ENCODE measurements at regions of chr7 and their contacts with region 1.

Region 1: GRCh38 chr7:129091484-129092002 is 36.6 kb upstream of the TNPO3 start:
- DNase-seq: peak; percentile 95
- H3K4me3 Mint-ChIP-seq: no peak overlapping the region
- H3K27ac Mint-ChIP-seq: peak overlapping the region; percentile 20
- H3K4me1 Mint-ChIP-seq: peaks cover 17% of the 10 kb centered on the region
- H3K27me3 Mint-ChIP-seq: no peaks in the 10 kb centered on the region

Region 2: DNA sequence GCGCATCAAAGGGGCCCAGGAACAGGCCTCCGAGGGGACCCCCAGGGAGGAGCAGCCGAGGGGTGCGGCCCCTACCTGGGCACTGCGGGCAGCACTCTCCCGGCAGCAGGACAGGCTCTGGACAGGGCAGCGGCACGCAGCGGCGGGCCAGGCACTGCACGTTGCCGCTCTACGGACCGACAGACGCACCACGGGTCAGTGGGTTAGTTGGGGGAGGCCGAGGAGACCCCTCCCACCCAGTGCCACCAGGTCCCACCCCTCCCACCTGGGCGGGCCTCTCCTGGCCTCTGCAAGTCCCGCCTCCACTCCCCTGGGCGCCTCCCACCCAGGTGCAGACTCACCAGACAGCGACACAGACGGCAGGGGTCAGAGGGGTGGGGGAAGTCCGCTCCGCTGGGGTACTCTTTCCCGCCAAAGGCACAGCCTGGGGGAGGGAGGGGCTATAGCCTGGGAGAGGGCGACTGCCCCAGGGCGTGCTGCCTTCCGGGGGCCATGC is 200.4 kb before region 1 on chr7:
- CTCF ChIA-PET with region 1: interaction called, 11 read pairs
- intact Hi-C with region 1: no loop called
- DNase-seq: peak; percentile 23
- H3K4me3 Mint-ChIP-seq: peak overlapping the region; percentile 23
- H3K27ac Mint-ChIP-seq: no peak overlapping the region
- H3K4me1 Mint-ChIP-seq: no peaks in the 10 kb centered on the region
- H3K27me3 Mint-ChIP-seq: peaks cover 11% of the 10 kb centered on the region

Region 3: GRCh38 chr7:128904381-128905197 is 187.0 kb before region 1 on chr7:
- CTCF ChIA-PET with region 1: interaction called, 21 read pairs
- intact Hi-C with region 1: loop called (anchors 1 kb)
- DNase-seq: peak; percentile 42
- H3K4me3 Mint-ChIP-seq: no peak overlapping the region
- H3K27ac Mint-ChIP-seq: no peak overlapping the region
- H3K4me1 Mint-ChIP-seq: no peaks in the 10 kb centered on the region
- H3K27me3 Mint-ChIP-seq: peaks cover 15% of the 10 kb centered on the region

Region 4: GRCh38 chr7:129009437-129009836 is 82.1 kb before region 1 on chr7:
- CTCF ChIA-PET with region 1: interaction called, 11 read pairs
- intact Hi-C with region 1: no loop called
- DNase-seq: no peak
- H3K4me3 Mint-ChIP-seq: no peak overlapping the region
- H3K27ac Mint-ChIP-seq: peak overlapping the region; percentile 84
- H3K4me1 Mint-ChIP-seq: peaks cover 35% of the 10 kb centered on the region
- H3K27me3 Mint-ChIP-seq: no peaks in the 10 kb centered on the region

Region 5: GRCh38 chr7:129101746-129102145 is 10.2 kb after region 1 on chr7:
- CTCF ChIA-PET with region 1: interaction called, 16 read pairs
- intact Hi-C with region 1: no loop called
- DNase-seq: no peak
- H3K4me3 Mint-ChIP-seq: no peak overlapping the region
- H3K27ac Mint-ChIP-seq: no peak overlapping the region
- H3K4me1 Mint-ChIP-seq: no peaks in the 10 kb centered on the region
- H3K27me3 Mint-ChIP-seq: no peaks in the 10 kb centered on the region

Measured in activated naive CD4-positive, alpha-beta T cell treated with anti-CD3 and anti-CD28 coated beads for 36 hours (primary cell).